CD4-positive, alpha-beta memory T cell (primary cell): ENCODE measurements at regions of chr9 and their contacts with region 1.

Region 1: GRCh38 chr9:37465249-37466036 is at the start of gene ZBTB5:
- DNase-seq: peak; percentile 99 to 100 (median 99)
- H3K4me3 ChIP-seq: peak within 1 kb of the TSS; percentile 72 to 77
- H3K4me3 Mint-ChIP-seq: peak within 1 kb of the TSS; percentile 93 to 99 (median 96)
- H3K27ac ChIP-seq: peak within 1 kb of the TSS; percentile 96
- H3K27ac Mint-ChIP-seq: peak within 1 kb of the TSS; percentile 95 to 99 (median 98)
- H3K4me1 ChIP-seq: peaks cover 35% of the 10 kb centered on the region
- H3K4me1 Mint-ChIP-seq: peaks cover 20 to 55% (median 31%) of the 10 kb centered on the region in 4 donors
- H3K27me3 ChIP-seq: no peaks in the 10 kb centered on the region
- H3K27me3 Mint-ChIP-seq: no peaks in the 10 kb centered on the region
- total RNA-seq, gene ZBTB5: 16.2 to 16.4 TPM

Region 2: GRCh38 chr9:37422289-37423104 is 42.9 kb before region 1 on chr9 and contains the start of gene GRHPR:
- CTCF ChIA-PET with region 1: no interaction called
- POLR2A ChIA-PET with region 1: interaction called, 4 read pairs
- intact Hi-C with region 1: loop called (anchors 1 kb)
- DNase-seq: peak; percentile 84 to 87 (median 86)
- H3K4me3 ChIP-seq: peak within 1 kb of the TSS; percentile 85 to 88
- H3K4me3 Mint-ChIP-seq: peak within 1 kb of the TSS; percentile 95 to 98 (median 96)
- H3K27ac ChIP-seq: peak within 1 kb of the TSS; percentile 72
- H3K27ac Mint-ChIP-seq: peak within 1 kb of the TSS; percentile 91 to 97 (median 95)
- H3K4me1 ChIP-seq: peaks cover 28% of the 10 kb centered on the region
- H3K4me1 Mint-ChIP-seq: peaks cover 18 to 34% (median 22%) of the 10 kb centered on the region in 4 donors
- H3K27me3 ChIP-seq: no peaks in the 10 kb centered on the region
- H3K27me3 Mint-ChIP-seq: no peaks in the 10 kb centered on the region
- total RNA-seq, gene GRHPR: 57.2 TPM

Region 3: GRCh38 chr9:37528652-37529510 is 63.4 kb after region 1 on chr9:
- CTCF ChIA-PET with region 1: no interaction called
- POLR2A ChIA-PET with region 1: interaction called, 6 read pairs
- intact Hi-C with region 1: loop called (anchors 1 kb)
- DNase-seq: peak; percentile 82 to 90 (median 87)
- H3K4me3 ChIP-seq: peak overlapping the region; percentile 19 to 37
- H3K4me3 Mint-ChIP-seq: peak overlapping the region; percentile 75 to 92 (median 84)
- H3K27ac ChIP-seq: peak overlapping the region; percentile 70
- H3K27ac Mint-ChIP-seq: peak overlapping the region; percentile 91 to 99 (median 99)
- H3K4me1 ChIP-seq: peaks cover 31% of the 10 kb centered on the region
- H3K4me1 Mint-ChIP-seq: peaks cover 15 to 36% (median 25%) of the 10 kb centered on the region in 4 donors
- H3K27me3 ChIP-seq: no peaks in the 10 kb centered on the region
- H3K27me3 Mint-ChIP-seq: no peaks in the 10 kb centered on the region

Region 4: GRCh38 chr9:37592108-37592951 is 126.9 kb after region 1 on chr9 and contains the start of gene TOMM5:
- CTCF ChIA-PET with region 1: interaction called, 3 read pairs
- POLR2A ChIA-PET with region 1: interaction called, 16 read pairs
- intact Hi-C with region 1: loop called (anchors 1 kb)
- DNase-seq: peak; percentile 90 to 93 (median 92)
- H3K4me3 ChIP-seq: peak within 1 kb of the TSS; percentile 92 to 100
- H3K4me3 Mint-ChIP-seq: peak within 1 kb of the TSS; percentile 97 to 100 (median 98)
- H3K27ac ChIP-seq: peak within 1 kb of the TSS; percentile 79
- H3K27ac Mint-ChIP-seq: peak within 1 kb of the TSS; percentile 96 to 99 (median 98)
- H3K4me1 ChIP-seq: peaks cover 39% of the 10 kb centered on the region
- H3K4me1 Mint-ChIP-seq: peaks cover 22 to 50% (median 36%) of the 10 kb centered on the region in 4 donors
- H3K27me3 ChIP-seq: no peaks in the 10 kb centered on the region
- H3K27me3 Mint-ChIP-seq: peaks cover 3 to 10% of the 10 kb centered on the region in 2 donors
- total RNA-seq, gene TOMM5: 48.2 to 51.1 TPM

Region 5: GRCh38 chr9:37676411-37676830 is 211.0 kb after region 1 on chr9:
- CTCF ChIA-PET with region 1: no interaction called
- POLR2A ChIA-PET with region 1: no interaction called
- intact Hi-C with region 1: no loop called
- DNase-seq: no peak
- H3K4me3 ChIP-seq: no peak overlapping the region
- H3K4me3 Mint-ChIP-seq: no peak overlapping the region
- H3K27ac ChIP-seq: no peak overlapping the region
- H3K27ac Mint-ChIP-seq: no peak overlapping the region
- H3K4me1 ChIP-seq: no peaks in the 10 kb centered on the region
- H3K4me1 Mint-ChIP-seq: no peaks in the 10 kb centered on the region
- H3K27me3 ChIP-seq: no peaks in the 10 kb centered on the region
- H3K27me3 Mint-ChIP-seq: peaks cover 11 to 15% of the 10 kb centered on the region in 2 donors

Region 6: DNA sequence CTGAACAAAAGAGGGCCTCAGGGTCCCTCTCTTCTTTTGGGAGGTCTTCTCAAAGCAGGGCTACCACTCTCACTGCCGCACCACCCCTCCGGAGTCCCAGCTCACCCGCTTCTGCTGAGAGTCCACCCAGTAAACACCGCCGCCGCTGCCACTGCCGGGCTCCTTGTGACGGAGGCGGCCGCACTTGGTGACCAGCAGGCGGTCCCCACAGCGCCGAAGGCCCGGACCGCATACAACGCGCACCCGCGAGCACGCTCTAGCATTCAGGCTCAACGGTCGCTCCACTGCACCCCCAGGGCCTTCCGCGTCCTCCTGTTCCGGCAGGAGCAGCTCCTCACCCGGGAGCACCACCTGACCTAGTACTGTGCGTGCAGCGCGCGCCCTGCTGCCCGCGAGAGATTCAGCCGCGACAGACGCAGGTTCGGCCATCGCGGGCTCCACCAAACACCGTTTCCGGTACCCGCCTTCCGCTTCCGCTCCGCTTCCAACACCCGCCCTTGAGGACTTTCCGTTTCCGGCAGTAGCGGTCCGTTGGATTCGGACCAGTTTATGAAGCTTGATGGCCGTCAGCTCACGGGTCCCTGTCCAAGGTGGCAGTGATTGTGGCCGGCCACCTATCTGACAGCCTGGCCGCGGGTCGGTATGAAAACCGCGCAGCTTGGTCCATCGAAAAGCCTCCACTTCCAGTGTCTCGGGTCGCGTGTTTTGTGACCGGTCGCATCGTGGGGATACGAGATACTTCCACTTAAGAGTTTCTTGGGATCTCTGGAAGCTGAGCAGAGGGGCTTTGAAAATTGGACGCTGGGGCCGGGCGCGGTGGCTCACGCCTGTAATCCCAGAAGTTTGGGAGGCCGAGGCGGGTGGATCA is 319.4 kb after region 1 on chr9 and contains the start of gene EXOSC3:
- CTCF ChIA-PET with region 1: no interaction called
- POLR2A ChIA-PET with region 1: no interaction called
- intact Hi-C with region 1: loop called (anchors 1 kb)
- DNase-seq: peak; percentile 82 to 88 (median 83)
- H3K4me3 ChIP-seq: peak within 1 kb of the TSS; percentile 93 to 98
- H3K4me3 Mint-ChIP-seq: peak within 1 kb of the TSS; percentile 96 to 99 (median 96)
- H3K27ac ChIP-seq: peak within 1 kb of the TSS; percentile 83
- H3K27ac Mint-ChIP-seq: peak within 1 kb of the TSS; percentile 95 to 98 (median 97)
- H3K4me1 ChIP-seq: peaks cover 31% of the 10 kb centered on the region
- H3K4me1 Mint-ChIP-seq: peaks cover 23 to 45% (median 30%) of the 10 kb centered on the region in 4 donors
- H3K27me3 ChIP-seq: no peaks in the 10 kb centered on the region
- H3K27me3 Mint-ChIP-seq: no peaks in the 10 kb centered on the region
- total RNA-seq, gene EXOSC3: 63.5 to 68.6 TPM